ENCODE measurements at regions of chr19 and their contacts with region 1.

Region 1: GRCh38 chr19:58513694-58514563 is 2.1 kb upstream of the SLC27A5 start:
- DNase-seq: peak; percentile 98
- H3K4me3 Mint-ChIP-seq: peak overlapping the region; percentile 83
- H3K27ac Mint-ChIP-seq: peak overlapping the region; percentile 91
- H3K4me1 Mint-ChIP-seq: peaks cover 26% of the 10 kb centered on the region
- H3K27me3 Mint-ChIP-seq: no peaks in the 10 kb centered on the region

Region 2: DNA sequence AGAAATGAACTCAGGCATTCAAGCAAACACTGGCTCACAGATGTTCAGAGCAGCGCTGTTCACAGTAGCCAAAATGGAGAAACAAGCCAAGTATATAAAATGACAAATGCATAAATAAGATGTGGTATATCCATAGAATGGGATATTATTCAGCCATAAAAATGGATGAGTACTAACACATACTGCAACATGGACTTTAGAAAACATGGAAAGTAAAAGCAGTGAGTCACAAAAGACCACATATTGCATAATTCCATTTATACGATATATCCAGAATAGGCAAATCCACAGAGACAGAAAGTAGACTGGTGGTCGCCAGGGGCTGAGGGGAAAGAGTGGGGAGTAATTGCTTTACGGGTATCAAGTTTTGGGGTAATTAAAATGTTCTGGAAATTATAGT is 139.7 kb before region 1 on chr19:
- CTCF ChIA-PET with region 1: no interaction called
- POLR2A ChIA-PET with region 1: no interaction called
- intact Hi-C with region 1: no loop called
- DNase-seq: no peak
- H3K4me3 Mint-ChIP-seq: no peak overlapping the region
- H3K27ac Mint-ChIP-seq: no peak overlapping the region
- H3K4me1 Mint-ChIP-seq: no peaks in the 10 kb centered on the region
- H3K27me3 Mint-ChIP-seq: no peaks in the 10 kb centered on the region

Region 3: GRCh38 chr19:58492265-58492664 is 21.7 kb before region 1 on chr19:
- CTCF ChIA-PET with region 1: interaction called, 10 read pairs
- POLR2A ChIA-PET with region 1: interaction called, 13 read pairs
- intact Hi-C with region 1: no loop called
- DNase-seq: no peak
- H3K4me3 Mint-ChIP-seq: no peak overlapping the region
- H3K27ac Mint-ChIP-seq: no peak overlapping the region
- H3K4me1 Mint-ChIP-seq: peaks cover 30% of the 10 kb centered on the region
- H3K27me3 Mint-ChIP-seq: no peaks in the 10 kb centered on the region

Region 4: GRCh38 chr19:58499021-58499927 is 14.7 kb before region 1 on chr19:
- CTCF ChIA-PET with region 1: interaction called, 21 read pairs
- POLR2A ChIA-PET with region 1: interaction called, 3 read pairs
- intact Hi-C with region 1: loop called (anchors 1 kb)
- DNase-seq: peak; percentile 100
- H3K4me3 Mint-ChIP-seq: peak overlapping the region; percentile 89
- H3K27ac Mint-ChIP-seq: peak overlapping the region; percentile 80
- H3K4me1 Mint-ChIP-seq: peaks cover 27% of the 10 kb centered on the region
- H3K27me3 Mint-ChIP-seq: no peaks in the 10 kb centered on the region

Region 5: GRCh38 chr19:58543826-58544590 is 30.1 kb after region 1 on chr19 and contains the start of gene TRIM28:
- CTCF ChIA-PET with region 1: interaction called, 61 read pairs
- POLR2A ChIA-PET with region 1: interaction called, 35 read pairs
- intact Hi-C with region 1: loop called (anchors 1 kb)
- DNase-seq: peak; percentile 100
- H3K4me3 Mint-ChIP-seq: peak within 1 kb of the TSS; percentile 97
- H3K27ac Mint-ChIP-seq: peak within 1 kb of the TSS; percentile 95
- H3K4me1 Mint-ChIP-seq: peaks cover 32% of the 10 kb centered on the region
- H3K27me3 Mint-ChIP-seq: peaks cover 7% of the 10 kb centered on the region
- total RNA-seq, gene TRIM28: 404 to 408 TPM

Region 6: DNA sequence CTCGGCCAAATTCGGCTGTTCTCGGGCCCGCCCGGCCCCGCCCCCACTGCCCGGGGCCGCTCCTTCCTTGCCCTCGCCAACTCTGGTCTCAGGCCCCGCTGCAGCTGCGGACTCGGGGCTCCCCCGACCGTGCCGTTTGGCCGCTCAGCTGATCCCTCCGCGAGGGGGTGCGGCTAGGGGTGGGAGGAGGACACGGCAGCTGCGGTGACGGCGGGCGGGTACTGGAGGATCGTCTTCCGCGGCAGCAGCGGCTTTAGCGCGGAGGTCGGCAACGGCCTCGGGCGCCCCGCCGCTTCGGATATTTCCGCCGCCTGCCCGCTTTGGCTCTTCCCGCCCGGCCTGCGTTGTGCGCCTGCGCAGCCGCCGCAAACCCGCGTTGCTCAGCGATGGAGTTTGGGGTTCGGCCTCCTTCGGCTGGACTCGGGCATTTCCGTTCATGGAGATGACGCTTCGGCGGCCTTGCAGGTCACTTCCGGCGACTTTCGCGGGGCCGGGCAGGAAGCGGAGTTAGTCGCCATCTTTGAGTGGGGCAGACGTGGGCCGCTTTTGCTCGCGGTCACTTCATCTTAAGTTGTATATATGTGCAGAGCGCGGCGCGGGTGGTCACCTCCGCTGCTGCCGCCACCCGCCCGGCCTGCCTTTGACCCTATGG is 44.8 kb after region 1 on chr19:
- CTCF ChIA-PET with region 1: interaction called, 39 read pairs
- POLR2A ChIA-PET with region 1: interaction called, 6 read pairs
- intact Hi-C with region 1: loop called (anchors 1 kb)
- DNase-seq: peak; percentile 100
- H3K4me3 Mint-ChIP-seq: peak overlapping the region; percentile 99
- H3K27ac Mint-ChIP-seq: peak overlapping the region; percentile 100
- H3K4me1 Mint-ChIP-seq: peaks cover 58% of the 10 kb centered on the region
- H3K27me3 Mint-ChIP-seq: no peaks in the 10 kb centered on the region

Region 7: GRCh38 chr19:58572818-58573657 is 59.1 kb after region 1 on chr19 and contains the start of gene MZF1:
- CTCF ChIA-PET with region 1: interaction called, 65 read pairs
- POLR2A ChIA-PET with region 1: interaction called, 16 read pairs
- intact Hi-C with region 1: loop called (anchors 1 kb)
- DNase-seq: peak; percentile 100
- H3K4me3 Mint-ChIP-seq: peak within 1 kb of the TSS; percentile 96
- H3K27ac Mint-ChIP-seq: peak within 1 kb of the TSS; percentile 100
- H3K4me1 Mint-ChIP-seq: peaks cover 33% of the 10 kb centered on the region
- H3K27me3 Mint-ChIP-seq: no peaks in the 10 kb centered on the region
- total RNA-seq, gene MZF1: 13.3 to 14.4 TPM

Region 8: DNA sequence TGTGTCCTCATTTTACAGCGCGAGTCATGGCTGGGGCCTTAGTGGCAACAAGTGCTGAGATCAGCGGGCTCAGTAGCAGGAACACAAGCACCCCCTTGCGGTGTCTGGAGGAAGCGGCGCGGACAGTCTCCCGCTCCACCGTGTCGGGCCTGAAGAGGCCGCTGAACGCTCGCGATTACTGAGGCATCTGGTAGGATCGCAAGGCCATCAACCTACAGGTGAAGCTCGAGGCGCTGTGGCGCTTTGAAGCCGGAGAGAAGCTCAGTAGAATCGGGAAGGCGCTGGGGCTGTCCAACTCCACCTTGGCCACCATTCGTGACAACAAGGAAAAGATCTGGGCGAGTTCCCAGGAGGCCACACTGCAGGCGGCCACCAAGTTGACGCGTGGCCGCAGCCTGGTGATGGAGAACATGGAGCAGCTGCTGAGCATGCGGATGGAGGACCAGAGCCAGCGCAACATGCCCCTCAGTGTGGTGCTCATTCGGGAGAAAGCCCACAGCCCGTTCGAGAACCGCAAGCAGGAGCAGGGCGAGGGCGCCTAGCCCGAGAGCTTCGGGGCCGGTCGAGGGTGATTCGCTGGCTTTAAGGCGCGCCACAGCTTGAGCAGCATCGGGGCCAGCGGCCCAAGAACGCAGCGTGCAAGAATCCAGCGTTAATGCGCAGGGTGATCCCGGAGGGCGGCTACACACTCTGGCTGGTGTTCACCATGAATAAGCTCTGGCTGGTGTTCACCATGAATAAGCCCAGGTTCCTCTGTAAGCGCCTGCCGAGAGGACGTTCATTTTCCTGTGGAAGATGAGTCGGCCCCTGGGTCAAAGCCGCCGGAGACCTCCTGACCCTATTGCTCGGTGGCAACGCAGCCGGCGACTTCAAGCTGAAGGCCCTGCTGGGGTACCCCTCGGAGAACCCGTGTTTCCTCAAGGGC is 67.6 kb after region 1 on chr19:
- CTCF ChIA-PET with region 1: interaction called, 65 read pairs
- POLR2A ChIA-PET with region 1: interaction called, 16 read pairs
- intact Hi-C with region 1: loop called (anchors 1 kb)
- DNase-seq: peak; percentile 96
- H3K4me3 Mint-ChIP-seq: no peak overlapping the region
- H3K27ac Mint-ChIP-seq: peak overlapping the region; percentile 78
- H3K4me1 Mint-ChIP-seq: peaks cover 36% of the 10 kb centered on the region
- H3K27me3 Mint-ChIP-seq: no peaks in the 10 kb centered on the region

Measured in activated CD4-positive, alpha-beta memory T cell treated with anti-CD3 and anti-CD28 coated beads for 36 hours (primary cell).